ENCODE measurements at regions of chr18 and their contacts with region 1.

Region 1: GRCh38 chr18:33231474-33232317 is 208.8 kb downstream of the CCDC178 start:
- DNase-seq: peak; percentile 75 to 87
- H3K4me3 ChIP-seq: no peak overlapping the region
- H3K4me1 ChIP-seq: no peaks in the 10 kb centered on the region
- H3K27me3 ChIP-seq: no peaks in the 10 kb centered on the region

Region 2: GRCh38 chr18:33495278-33495677 is 263.6 kb after region 1 on chr18:
- in situ Hi-C with region 1: loop called (anchors 10 kb)
- DNase-seq: peak; percentile 34 to 54
- H3K4me3 ChIP-seq: no peak overlapping the region
- H3K4me1 ChIP-seq: no peaks in the 10 kb centered on the region
- H3K27me3 ChIP-seq: peaks cover 3% of the 10 kb centered on the region